Heart right ventricle (tissue), 16 donors: ENCODE measurements at regions of chr10 and their contacts with region 1.

Region 1: DNA sequence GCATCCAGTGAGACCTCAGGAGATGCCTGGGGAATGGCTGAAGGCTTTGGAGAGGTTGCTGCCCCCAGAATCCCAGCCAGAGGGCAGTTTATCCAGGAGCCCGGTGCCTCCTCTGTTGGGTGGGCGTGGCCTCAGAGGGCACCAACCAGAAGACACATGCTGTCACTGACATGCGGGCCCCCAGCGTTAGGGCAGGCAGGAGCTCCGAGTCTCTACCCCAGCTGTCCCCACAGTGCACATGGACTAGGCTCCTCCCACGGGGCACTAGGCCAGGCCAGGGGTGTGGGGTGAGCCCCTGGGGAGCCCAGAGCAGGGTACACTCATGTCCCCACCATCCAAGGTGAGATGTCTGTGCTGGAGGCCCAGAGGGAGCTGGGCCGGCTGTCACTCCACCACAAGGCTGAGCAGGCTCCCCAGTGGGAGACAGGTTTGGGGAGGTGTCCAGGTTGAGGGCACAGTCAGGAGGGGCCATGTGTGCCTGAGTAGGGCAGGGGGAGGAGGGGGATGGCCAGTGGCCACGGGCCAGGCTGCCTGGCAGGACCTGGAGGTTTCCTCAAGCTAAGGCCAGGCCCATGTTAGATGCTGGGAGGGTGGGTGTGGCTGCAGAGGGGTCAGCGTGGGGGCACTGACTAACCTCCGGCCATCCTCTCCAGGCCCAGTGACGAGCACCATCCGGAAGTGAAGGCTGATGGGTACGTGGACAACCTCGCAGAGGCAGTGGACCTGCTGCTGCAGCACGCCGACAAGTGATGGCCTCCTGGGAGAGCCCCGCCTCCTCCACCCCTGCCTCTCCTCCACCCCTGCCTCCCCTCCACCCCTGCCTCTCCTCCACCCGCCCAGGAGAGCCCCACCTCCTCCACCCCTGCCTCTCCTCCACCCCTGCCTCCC is 131.3 kb downstream of the FAM53B start:
- DNase-seq: peak; percentile 33 to 34
- ATAC-seq: peak; percentile 18 to 73 (median 39)
- H3K4me3 ChIP-seq: no peak overlapping the region
- H3K27ac ChIP-seq: peak overlapping the region in 5 of 10 donors; percentile 7 to 64 (median 46)
- H3K4me1 ChIP-seq: peaks cover 3 to 30% (median 18%) of the 10 kb centered on the region in 9 donors
- H3K27me3 ChIP-seq: no peaks in the 10 kb centered on the region
- CTCF ChIP-seq: no peak

Region 2: DNA sequence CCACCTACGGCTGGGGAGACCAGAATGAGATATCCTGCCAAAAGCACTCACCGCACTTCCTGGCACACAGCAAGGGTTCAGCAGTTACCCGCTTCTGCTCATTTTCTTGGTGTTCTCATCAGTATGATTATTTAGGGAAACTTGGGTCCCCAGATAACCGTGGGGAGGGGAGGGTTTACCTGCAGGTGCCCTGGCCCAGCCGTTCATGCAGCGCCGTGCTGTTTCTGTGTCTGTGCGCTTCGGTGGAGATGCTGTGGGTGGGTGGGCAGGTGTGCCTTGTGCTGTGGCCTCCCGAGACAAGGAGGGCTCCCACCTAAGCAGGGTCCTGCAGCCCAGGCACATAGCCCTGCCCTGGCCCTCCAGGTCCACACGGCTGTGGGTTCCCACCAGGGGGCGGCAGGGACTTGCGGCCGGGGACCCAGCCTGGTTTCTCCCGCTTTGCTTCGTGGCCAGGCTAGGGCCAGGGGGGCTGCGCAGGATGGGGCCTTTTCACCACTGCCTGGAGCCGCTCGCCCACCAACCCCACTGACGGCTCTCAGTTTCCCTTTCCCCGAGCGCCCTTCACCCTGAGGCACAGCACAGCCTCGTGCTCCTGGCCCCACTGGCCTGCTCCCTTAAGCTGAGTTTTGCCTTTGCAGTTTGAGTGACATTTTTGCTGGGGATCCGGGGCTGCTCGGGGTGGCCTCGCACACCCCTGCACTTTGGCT is 72.8 kb before region 1 on chr10:
- intact Hi-C with region 1: loop called in 1 of 10 experiments (anchors 10 kb)
- DNase-seq: peak; percentile 70 to 82
- ATAC-seq: peak; percentile 75 to 92 (median 88)
- H3K4me3 ChIP-seq: no peak overlapping the region
- H3K27ac ChIP-seq: no peak overlapping the region
- H3K4me1 ChIP-seq: peaks cover 0 to 25% (median 10%) of the 10 kb centered on the region in 9 donors
- H3K27me3 ChIP-seq: no peaks in the 10 kb centered on the region
- CTCF ChIP-seq: peak; percentile 76 to 95 (median 87)

Region 3: GRCh38 chr10:124560377-124561105 is 52.3 kb before region 1 on chr10:
- intact Hi-C with region 1: loop called in 1 of 10 experiments (anchors 10 kb)
- DNase-seq: peak; percentile 56 to 74
- ATAC-seq: peak; percentile 88 to 96 (median 94)
- H3K4me3 ChIP-seq: no peak overlapping the region
- H3K27ac ChIP-seq: peak overlapping the region; percentile 47 to 93 (median 81)
- H3K4me1 ChIP-seq: peaks cover 7 to 54% (median 42%) of the 10 kb centered on the region in 9 donors
- H3K27me3 ChIP-seq: no peaks in the 10 kb centered on the region
- CTCF ChIP-seq: peak in 1 of 9 donors; percentile 8